ENCODE measurements at regions of chr1 and their contacts with region 1.

Region 1: GRCh38 chr1:10694633-10695627 is 101.5 kb downstream of the CASZ1 start:
- DNase-seq: peak; percentile 54 to 96 (median 78)

Region 2: GRCh38 chr1:9823943-9824701 is 870.8 kb before region 1 on chr1 and contains the start of gene CLSTN1:
- intact Hi-C with region 1: loop called (anchors 10 kb)
- DNase-seq: peak; percentile 86 to 99 (median 92)

Region 3: GRCh38 chr1:10161541-10162290 is 533.2 kb before region 1 on chr1:
- intact Hi-C with region 1: no loop called
- DNase-seq: peak in 1 of 10 donors; percentile 16

Measured in posterior cingulate gyrus (tissue), 11 donors.